ENCODE measurements at regions of chr6 and their contacts with region 1.

Region 1: GRCh38 chr6:188821-189655 is 103.2 kb upstream of the DUSP22 start:
- DNase-seq: peak; percentile 36 to 80 (median 61)
- ATAC-seq: peak; percentile 91
- H3K4me3 ChIP-seq: no peak overlapping the region
- H3K4me3 Mint-ChIP-seq: peak overlapping the region in 1 of 10 donors; percentile 52
- H3K27ac ChIP-seq: no peak overlapping the region
- H3K27ac Mint-ChIP-seq: peak overlapping the region in 2 of 9 donors; percentile 47 to 51
- H3K4me1 ChIP-seq: peaks cover 12 to 25% of the 10 kb centered on the region in 2 donors
- H3K4me1 Mint-ChIP-seq: peaks cover 16 to 38% (median 34%) of the 10 kb centered on the region in 7 donors
- H3K27me3 ChIP-seq: no peaks in the 10 kb centered on the region
- H3K27me3 Mint-ChIP-seq: no peaks in the 10 kb centered on the region

Region 2: GRCh38 chr6:235763-236360 is 46.8 kb after region 1 on chr6:
- CTCF ChIA-PET with region 1: no interaction called
- POLR2A ChIA-PET with region 1: interaction called, 3 read pairs
- intact Hi-C with region 1: loop called in 1 of 2 experiments (anchors 2 kb)
- DNase-seq: peak in 8 of 9 donors; percentile 33 to 66 (median 60)
- ATAC-seq: peak; percentile 88
- H3K4me3 ChIP-seq: peak overlapping the region; percentile 41
- H3K4me3 Mint-ChIP-seq: peak overlapping the region; percentile 67 to 85 (median 79)
- H3K27ac ChIP-seq: peak overlapping the region; percentile 56
- H3K27ac Mint-ChIP-seq: peak overlapping the region; percentile 82 to 95 (median 88)
- H3K4me1 ChIP-seq: peaks cover 15 to 22% of the 10 kb centered on the region in 2 donors
- H3K4me1 Mint-ChIP-seq: peaks cover 19 to 45% (median 27%) of the 10 kb centered on the region in 7 donors
- H3K27me3 ChIP-seq: no peaks in the 10 kb centered on the region
- H3K27me3 Mint-ChIP-seq: no peaks in the 10 kb centered on the region

Region 3: DNA sequence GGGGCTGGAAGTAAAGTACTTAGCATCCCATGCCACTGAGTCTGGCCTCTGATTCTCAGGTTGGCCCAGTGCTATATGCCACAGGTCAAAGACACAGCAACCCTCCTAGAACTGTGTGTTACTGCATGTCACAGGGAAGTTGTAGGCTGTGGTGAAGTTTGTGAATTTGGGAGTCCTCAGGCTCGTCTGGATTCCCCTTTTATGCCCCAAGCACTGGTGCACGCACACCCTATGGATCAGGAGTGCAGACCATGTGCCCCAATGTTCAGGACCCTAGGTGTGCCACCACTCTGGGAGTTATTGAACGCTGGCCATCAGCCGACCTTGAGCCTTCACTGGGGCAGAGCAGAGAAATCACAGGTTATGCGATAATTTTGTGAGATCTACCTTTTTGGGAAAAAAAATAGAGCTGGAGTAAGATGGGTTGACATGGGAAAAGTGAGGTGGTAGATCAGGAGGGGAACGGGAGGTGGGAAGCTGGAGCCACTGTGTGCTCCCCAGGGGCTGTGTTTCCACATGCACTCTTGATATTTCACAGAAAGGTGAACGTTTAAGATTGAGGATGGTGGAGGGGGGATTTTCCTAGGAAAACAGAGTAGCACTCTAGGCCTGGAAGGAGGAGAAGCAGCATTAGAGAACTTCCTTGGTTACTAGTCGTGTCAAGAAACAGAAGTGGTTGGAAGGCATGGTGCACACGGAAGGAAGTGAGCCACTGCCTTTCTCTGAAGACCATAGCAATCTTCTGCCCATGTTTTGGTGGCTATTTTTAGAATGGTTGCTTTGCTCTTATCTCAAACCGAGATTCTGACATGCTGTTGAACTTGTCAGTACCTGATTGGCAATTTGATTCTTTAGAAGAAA is 147.4 kb after region 1 on chr6:
- CTCF ChIA-PET with region 1: interaction called, 4 read pairs
- POLR2A ChIA-PET with region 1: no interaction called
- intact Hi-C with region 1: loop called (anchors 2 kb)
- DNase-seq: peak in 2 of 9 donors; percentile 13 to 18
- ATAC-seq: peak; percentile 58
- H3K4me3 ChIP-seq: no peak overlapping the region
- H3K4me3 Mint-ChIP-seq: peak overlapping the region; percentile 2 to 74 (median 42)
- H3K27ac ChIP-seq: no peak overlapping the region
- H3K27ac Mint-ChIP-seq: peak overlapping the region in 7 of 9 donors; percentile 18 to 87 (median 60)
- H3K4me1 ChIP-seq: peaks cover 21 to 28% of the 10 kb centered on the region in 2 donors
- H3K4me1 Mint-ChIP-seq: peaks cover 28 to 54% (median 52%) of the 10 kb centered on the region in 7 donors
- H3K27me3 ChIP-seq: no peaks in the 10 kb centered on the region
- H3K27me3 Mint-ChIP-seq: no peaks in the 10 kb centered on the region

Region 4: DNA sequence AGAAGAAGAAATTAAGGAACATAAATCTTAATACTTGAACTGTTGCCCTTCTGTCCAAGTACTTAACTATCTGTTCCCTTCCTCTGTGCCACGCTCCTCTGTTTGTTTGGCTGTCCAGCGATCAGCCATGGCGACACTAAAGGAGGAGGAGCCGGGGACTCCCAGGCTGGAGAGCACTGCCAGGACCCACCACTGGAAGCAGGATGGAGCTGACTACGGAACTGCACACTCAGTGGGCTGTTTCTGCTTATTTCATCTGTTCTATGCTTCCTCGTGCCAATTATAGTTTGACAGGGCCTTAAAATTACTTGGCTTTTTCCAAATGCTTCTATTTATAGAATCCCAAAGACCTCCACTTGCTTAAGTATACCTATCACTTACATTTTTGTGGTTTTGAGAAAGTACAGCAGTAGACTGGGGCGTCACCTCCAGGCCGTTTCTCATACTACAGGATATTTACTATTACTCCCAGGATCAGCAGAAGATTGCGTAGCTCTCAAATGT is 219.6 kb after region 1 on chr6:
- CTCF ChIA-PET with region 1: interaction called, 3 read pairs
- POLR2A ChIA-PET with region 1: interaction called, 4 read pairs
- intact Hi-C with region 1: loop called (anchors 1 kb)
- DNase-seq: no peak
- ATAC-seq: peak; percentile 73
- H3K4me3 ChIP-seq: no peak overlapping the region
- H3K4me3 Mint-ChIP-seq: no peak overlapping the region
- H3K27ac ChIP-seq: no peak overlapping the region
- H3K27ac Mint-ChIP-seq: peak overlapping the region in 2 of 9 donors; percentile 24 to 60
- H3K4me1 ChIP-seq: peaks cover 0 to 17% of the 10 kb centered on the region in 2 donors
- H3K4me1 Mint-ChIP-seq: peaks cover 12 to 73% (median 31%) of the 10 kb centered on the region in 7 donors
- H3K27me3 ChIP-seq: no peaks in the 10 kb centered on the region
- H3K27me3 Mint-ChIP-seq: no peaks in the 10 kb centered on the region

Region 5: DNA sequence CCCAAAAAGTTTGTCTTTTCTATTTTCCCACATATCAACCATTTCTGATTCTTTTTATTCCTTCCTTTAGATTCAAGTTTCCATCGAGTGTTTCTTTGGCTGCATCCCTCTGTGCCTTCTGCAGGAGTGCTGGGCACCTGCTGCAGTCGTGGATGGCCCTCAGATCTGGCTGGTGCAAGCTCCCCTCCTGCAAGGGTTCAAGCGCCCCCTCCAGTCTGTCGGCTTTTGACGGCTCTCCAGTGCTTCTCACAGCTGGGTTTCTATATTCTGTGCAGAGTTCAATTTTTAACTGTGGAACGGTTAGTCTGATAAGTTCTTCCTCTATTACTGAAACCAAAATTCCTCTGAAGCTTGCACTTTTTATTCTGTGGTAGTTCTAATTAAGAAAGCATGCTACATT is 335.8 kb after region 1 on chr6:
- CTCF ChIA-PET with region 1: no interaction called
- POLR2A ChIA-PET with region 1: no interaction called
- intact Hi-C with region 1: loop called in 1 of 2 experiments (anchors 1 kb)
- DNase-seq: peak in 2 of 9 donors; percentile 15 to 16
- ATAC-seq: peak; percentile 41
- H3K4me3 ChIP-seq: no peak overlapping the region
- H3K4me3 Mint-ChIP-seq: no peak overlapping the region
- H3K27ac ChIP-seq: no peak overlapping the region
- H3K27ac Mint-ChIP-seq: peak overlapping the region in 6 of 9 donors; percentile 15 to 90 (median 48)
- H3K4me1 ChIP-seq: no peaks in the 10 kb centered on the region
- H3K4me1 Mint-ChIP-seq: peaks cover 5 to 19% (median 13%) of the 10 kb centered on the region in 7 donors
- H3K27me3 ChIP-seq: no peaks in the 10 kb centered on the region
- H3K27me3 Mint-ChIP-seq: no peaks in the 10 kb centered on the region

Region 6: GRCh38 chr6:692855-693722 is 504.1 kb after region 1 on chr6 and contains the start of gene EXOC2:
- CTCF ChIA-PET with region 1: no interaction called
- POLR2A ChIA-PET with region 1: interaction called, 3 read pairs
- intact Hi-C with region 1: loop called in 1 of 2 experiments (anchors 5 kb)
- DNase-seq: peak; percentile 70 to 88 (median 81)
- ATAC-seq: peak; percentile 93
- H3K4me3 ChIP-seq: peak within 1 kb of the TSS; percentile 87
- H3K4me3 Mint-ChIP-seq: peak within 1 kb of the TSS; percentile 92 to 96 (median 95)
- H3K27ac ChIP-seq: peak within 1 kb of the TSS; percentile 83
- H3K27ac Mint-ChIP-seq: peak within 1 kb of the TSS; percentile 84 to 92 (median 91)
- H3K4me1 ChIP-seq: peaks cover 14 to 20% of the 10 kb centered on the region in 2 donors
- H3K4me1 Mint-ChIP-seq: peaks cover 23 to 45% (median 29%) of the 10 kb centered on the region in 7 donors
- H3K27me3 ChIP-seq: no peaks in the 10 kb centered on the region
- H3K27me3 Mint-ChIP-seq: no peaks in the 10 kb centered on the region
- total RNA-seq, gene EXOC2: 26.7 to 40.6 (median 38.8) TPM

Region 7: GRCh38 chr6:1381481-1382330 is 1192.7 kb after region 1 on chr6:
- CTCF ChIA-PET with region 1: no interaction called
- POLR2A ChIA-PET with region 1: no interaction called
- intact Hi-C with region 1: loop called in 1 of 2 experiments (anchors 5 kb)
- DNase-seq: peak in 8 of 9 donors; percentile 7 to 77 (median 49)
- ATAC-seq: peak; percentile 78
- H3K4me3 ChIP-seq: no peak overlapping the region
- H3K4me3 Mint-ChIP-seq: peak overlapping the region; percentile 31 to 75 (median 52)
- H3K27ac ChIP-seq: no peak overlapping the region
- H3K27ac Mint-ChIP-seq: no peak overlapping the region
- H3K4me1 ChIP-seq: peaks cover 0 to 16% of the 10 kb centered on the region in 2 donors
- H3K4me1 Mint-ChIP-seq: peaks cover 21 to 50% (median 37%) of the 10 kb centered on the region in 7 donors
- H3K27me3 ChIP-seq: peaks cover 8 to 20% of the 10 kb centered on the region in 2 donors
- H3K27me3 Mint-ChIP-seq: peaks cover 54 to 81% (median 57%) of the 10 kb centered on the region in 5 donors

Measured in naive thymus-derived CD4-positive, alpha-beta T cell (primary cell).